WTC11 (cell line): ENCODE measurements at regions of chr2 and their contacts with region 1.

Region 1: DNA sequence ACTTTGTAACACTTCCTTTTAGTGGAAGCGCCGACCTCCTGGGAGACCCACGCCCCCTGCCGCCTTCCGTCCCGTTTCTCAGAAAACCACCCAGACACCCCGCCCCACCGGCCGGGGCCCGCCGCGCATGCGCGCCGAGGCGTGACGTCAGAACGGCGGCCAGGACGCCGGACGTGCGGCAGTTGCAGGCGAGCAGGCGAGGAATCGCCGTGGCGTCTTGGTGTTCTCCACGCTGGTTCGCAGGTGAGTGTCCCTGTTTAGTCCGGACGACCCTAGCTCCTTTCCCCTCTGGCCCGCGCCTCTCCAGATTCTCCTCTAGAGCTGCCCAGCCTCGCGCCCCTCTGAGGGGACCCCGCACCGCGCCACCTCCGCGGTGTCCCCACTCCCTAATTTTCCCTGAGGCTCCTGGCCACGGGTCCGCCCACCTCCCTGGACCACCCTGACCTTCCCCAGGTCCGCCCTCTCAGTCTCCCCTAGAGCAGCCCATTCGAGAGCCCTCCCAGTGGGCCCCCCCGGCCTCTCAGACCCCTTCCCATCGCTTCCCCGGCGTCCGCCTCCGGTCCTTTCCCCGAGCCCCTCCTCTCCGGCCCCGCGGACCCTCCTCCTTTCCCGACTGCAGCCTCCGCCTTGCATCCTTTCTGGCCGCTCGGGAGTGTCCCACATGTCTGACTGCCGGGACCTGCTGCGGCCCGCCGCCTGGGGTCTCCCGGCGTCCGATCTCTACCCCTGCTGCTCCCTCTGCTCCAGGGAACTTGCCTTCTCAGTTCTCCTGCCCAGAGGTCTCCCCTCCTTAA is at the start of gene PLEKHB2:
- DNase-seq: peak; percentile 91
- ATAC-seq: peak; percentile 76
- H3K4me3 Mint-ChIP-seq: peak within 1 kb of the TSS; percentile 92
- H3K27ac Mint-ChIP-seq: peak within 1 kb of the TSS; percentile 89
- H3K4me1 Mint-ChIP-seq: peaks cover 24% of the 10 kb centered on the region
- H3K27me3 Mint-ChIP-seq: no peaks in the 10 kb centered on the region
- CTCF ChIP-seq: no peak
- total RNA-seq, gene PLEKHB2: 62.1 to 65.6 TPM (median 63.1 TPM) in 3 replicates

Region 2: GRCh38 chr2:131093006-131093695 is 12.2 kb before region 1 on chr2 and contains the start of gene FAM168B:
- CTCF ChIA-PET with region 1: interaction called, 5 read pairs
- POLR2A ChIA-PET with region 1: interaction called, 15 read pairs
- DNase-seq: peak; percentile 83
- ATAC-seq: peak; percentile 90
- H3K4me3 Mint-ChIP-seq: peak within 1 kb of the TSS; percentile 91
- H3K27ac Mint-ChIP-seq: peak within 1 kb of the TSS; percentile 95
- H3K4me1 Mint-ChIP-seq: peaks cover 7% of the 10 kb centered on the region
- H3K27me3 Mint-ChIP-seq: no peaks in the 10 kb centered on the region
- CTCF ChIP-seq: no peak
- total RNA-seq, gene FAM168B: 63.9 to 74.9 TPM (median 68.7 TPM) in 3 replicates